Activated naive CD4-positive, alpha-beta T cell treated with anti-CD3 and anti-CD28 coated beads, Interleukin-2, amount 10 ng/mL, durations not matched to agents 7 days and 5 days (primary cell): ENCODE measurements at regions of chr11 and their contacts with region 1.

Region 1: GRCh38 chr11:128884703-128885338 is 6.3 kb upstream of the KCNJ5 start:
- DNase-seq: peak; percentile 67
- H3K4me3 Mint-ChIP-seq: no peak overlapping the region
- H3K27ac Mint-ChIP-seq: no peak overlapping the region
- H3K4me1 Mint-ChIP-seq: peaks cover 4% of the 10 kb centered on the region
- H3K27me3 Mint-ChIP-seq: peaks cover 74% of the 10 kb centered on the region

Region 2: GRCh38 chr11:128874427-128874826 is 10.4 kb before region 1 on chr11:
- CTCF ChIA-PET with region 1: interaction called, 11 read pairs
- DNase-seq: peak; percentile 1
- H3K4me3 Mint-ChIP-seq: no peak overlapping the region
- H3K27ac Mint-ChIP-seq: no peak overlapping the region
- H3K4me1 Mint-ChIP-seq: no peaks in the 10 kb centered on the region
- H3K27me3 Mint-ChIP-seq: peaks cover 76% of the 10 kb centered on the region

Region 3: DNA sequence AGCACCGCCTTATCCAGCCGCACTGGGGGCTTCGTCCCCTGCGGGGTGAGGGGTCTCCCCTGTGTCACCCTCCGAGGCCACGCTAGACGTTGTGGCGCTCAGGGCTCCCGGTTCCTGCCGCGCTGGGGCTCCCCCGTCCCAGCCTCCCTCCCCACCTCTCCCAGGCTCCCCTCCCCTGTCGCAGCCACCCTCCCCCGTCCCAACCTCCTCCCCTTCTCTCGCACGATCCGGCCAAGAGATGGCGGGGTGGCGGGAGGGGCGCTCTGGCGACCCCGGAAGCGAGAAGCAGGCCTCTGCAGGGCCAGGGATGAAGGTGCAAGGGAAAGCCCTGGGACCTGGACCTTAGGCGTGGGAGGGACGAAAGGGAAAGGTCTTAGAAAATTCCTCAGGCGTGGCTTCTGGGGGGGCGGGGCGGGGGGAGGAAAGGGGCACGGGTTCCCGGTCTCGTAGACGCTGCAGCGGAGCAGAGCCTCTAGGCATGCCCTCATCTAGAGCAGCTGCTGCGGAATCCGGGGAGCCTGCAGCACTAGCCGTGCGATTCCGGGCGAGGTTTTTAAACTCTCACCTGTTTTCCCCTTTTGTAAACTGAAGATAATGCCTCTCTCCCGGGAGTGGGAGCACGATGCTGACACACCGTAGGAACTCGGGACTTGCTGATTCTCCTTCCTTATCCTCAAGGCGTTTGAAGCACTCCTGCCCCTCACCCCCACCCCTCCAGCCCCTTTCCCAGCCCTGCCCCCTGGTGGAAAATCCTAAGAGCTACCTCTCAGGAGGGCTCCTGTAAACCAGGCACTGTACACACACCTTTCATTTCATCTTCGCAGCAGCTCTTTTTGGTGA is 20.7 kb after region 1 on chr11:
- CTCF ChIA-PET with region 1: interaction called, 57 read pairs
- DNase-seq: peak; percentile 64
- H3K4me3 Mint-ChIP-seq: peak overlapping the region; percentile 70
- H3K27ac Mint-ChIP-seq: no peak overlapping the region
- H3K4me1 Mint-ChIP-seq: peaks cover 12% of the 10 kb centered on the region
- H3K27me3 Mint-ChIP-seq: peaks cover 85% of the 10 kb centered on the region

Region 4: DNA sequence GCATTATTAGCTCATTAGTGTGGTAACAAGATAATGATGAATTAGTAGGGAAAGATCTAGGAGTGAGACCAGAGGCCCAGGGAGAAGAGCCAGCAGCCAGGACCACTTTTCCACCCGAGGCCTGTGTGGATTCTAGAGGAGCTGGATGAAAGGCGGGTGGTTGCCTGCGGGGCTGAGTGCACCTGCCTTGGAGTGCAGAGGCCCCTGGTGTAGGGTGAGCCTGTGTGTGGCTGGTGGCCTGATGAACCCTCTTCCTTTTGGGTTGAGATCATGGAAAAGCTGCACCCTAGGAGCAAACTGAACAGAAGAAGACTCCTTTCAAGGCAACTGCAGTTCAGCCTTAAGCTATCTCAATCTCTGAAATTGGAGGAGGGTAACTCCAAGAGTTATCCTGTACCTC is 63.8 kb after region 1 on chr11:
- CTCF ChIA-PET with region 1: interaction called, 29 read pairs
- DNase-seq: no peak
- H3K4me3 Mint-ChIP-seq: no peak overlapping the region
- H3K27ac Mint-ChIP-seq: no peak overlapping the region
- H3K4me1 Mint-ChIP-seq: no peaks in the 10 kb centered on the region
- H3K27me3 Mint-ChIP-seq: peaks cover 15% of the 10 kb centered on the region

Region 5: DNA sequence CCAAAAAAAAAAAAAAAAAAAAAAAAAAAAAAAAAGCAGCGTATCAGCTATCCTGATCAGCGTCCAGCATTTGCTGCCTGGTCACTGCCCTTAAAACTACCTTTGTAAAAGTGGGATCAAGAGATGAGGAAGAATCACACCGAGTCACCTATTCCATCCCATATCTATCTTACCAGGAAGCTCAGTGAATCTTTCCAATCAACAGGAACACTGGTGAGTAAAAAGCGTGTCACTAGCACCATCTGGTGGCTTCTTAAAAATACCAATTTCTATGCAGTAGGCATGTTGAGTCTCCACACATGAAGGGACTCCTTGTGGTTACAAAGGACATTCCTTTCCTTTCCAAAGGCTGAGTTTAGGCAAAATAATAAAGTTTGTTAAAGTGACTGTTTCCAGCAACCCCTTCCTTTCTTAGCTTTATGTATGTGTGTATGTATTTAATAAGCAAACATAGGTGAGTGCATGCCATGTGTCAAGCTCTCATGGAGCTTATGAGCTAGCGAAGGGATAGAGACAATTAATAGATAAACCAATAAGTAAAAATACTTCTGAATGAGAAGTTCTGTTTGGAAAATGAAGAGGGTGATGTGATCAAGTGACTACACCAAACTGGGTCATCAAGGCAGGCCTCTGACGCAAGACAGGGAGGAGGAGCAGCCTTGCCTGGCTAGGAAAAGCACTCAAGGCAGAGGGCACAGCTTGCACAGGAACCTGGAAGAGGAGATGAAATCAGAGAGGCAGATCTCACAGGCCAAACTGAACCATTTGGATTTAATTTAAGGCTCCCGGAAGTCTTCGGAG is 71.8 kb after region 1 on chr11:
- CTCF ChIA-PET with region 1: interaction called, 219 read pairs
- DNase-seq: no peak
- H3K4me3 Mint-ChIP-seq: no peak overlapping the region
- H3K27ac Mint-ChIP-seq: no peak overlapping the region
- H3K4me1 Mint-ChIP-seq: no peaks in the 10 kb centered on the region
- H3K27me3 Mint-ChIP-seq: peaks cover 14% of the 10 kb centered on the region

Region 6: GRCh38 chr11:129331871-129332274 is 447.1 kb after region 1 on chr11:
- CTCF ChIA-PET with region 1: interaction called, 19 read pairs
- DNase-seq: peak; percentile 75
- H3K4me3 Mint-ChIP-seq: no peak overlapping the region
- H3K27ac Mint-ChIP-seq: no peak overlapping the region
- H3K4me1 Mint-ChIP-seq: peaks cover 5% of the 10 kb centered on the region
- H3K27me3 Mint-ChIP-seq: peaks cover 15% of the 10 kb centered on the region